Activated T-helper 2 cell treated with anti-CD3 and anti-CD28 coated beads, Interferon-gamma antibody, Interleukin-2, Interleukin-4, amounts not matched to agents 10 μg/mL and 5 μg/mL and 100 μg/mL, durations not matched to agents 14 hours and 24 hours and 36 hours (primary cell): ENCODE measurements at regions of chrX and their contacts with region 1.

Region 1: GRCh38 chrX:153667956-153668396 is 5.6 kb downstream of the PNCK start:
- DNase-seq: peak; percentile 51
- H3K4me3 Mint-ChIP-seq: peak overlapping the region; percentile 74
- H3K27ac Mint-ChIP-seq: no peak overlapping the region
- H3K4me1 Mint-ChIP-seq: peaks cover 6% of the 10 kb centered on the region
- H3K27me3 Mint-ChIP-seq: peaks cover 19% of the 10 kb centered on the region

Region 2: DNA sequence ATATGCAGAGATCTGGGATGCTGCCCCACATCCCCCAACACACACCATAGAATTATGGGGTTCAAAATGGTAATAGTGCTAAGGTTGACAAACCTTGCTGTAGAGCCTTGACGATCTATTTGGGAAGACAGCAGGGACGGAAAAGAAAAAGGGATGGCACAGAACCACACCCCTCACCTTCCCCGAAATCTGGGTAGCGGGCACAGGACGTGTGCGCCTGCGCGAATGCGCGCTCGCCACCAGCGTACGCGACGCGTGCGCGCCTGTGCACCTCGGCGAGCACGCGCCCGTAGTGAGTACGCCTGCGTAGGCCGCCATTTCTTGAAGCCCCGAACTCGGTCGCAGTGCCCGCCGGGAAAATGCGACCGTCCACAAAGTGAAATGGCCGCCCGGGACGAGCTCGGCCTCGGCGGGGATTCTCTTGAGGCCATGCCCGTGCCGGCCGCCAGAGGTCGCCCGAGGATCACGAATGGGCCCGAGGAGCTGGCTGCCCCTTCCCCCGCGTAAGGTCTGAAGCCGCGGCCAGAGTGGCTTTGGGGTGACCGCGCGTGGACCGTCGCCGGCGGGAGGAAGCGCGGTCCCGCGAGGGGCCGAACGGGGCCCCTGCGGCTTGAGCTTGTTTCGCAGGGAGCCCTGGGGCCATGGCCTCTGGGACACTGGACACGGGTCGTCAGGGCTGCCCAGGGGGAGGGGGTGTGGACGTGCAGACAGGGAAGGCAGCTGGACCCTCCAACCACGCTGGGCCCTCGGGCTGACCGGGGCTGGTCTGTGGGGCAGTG is 726.5 kb before region 1 on chrX:
- intact Hi-C with region 1: loop called (anchors 5 kb)
- DNase-seq: peak; percentile 84
- H3K4me3 Mint-ChIP-seq: peak overlapping the region; percentile 80
- H3K27ac Mint-ChIP-seq: peak overlapping the region; percentile 76
- H3K4me1 Mint-ChIP-seq: peaks cover 7% of the 10 kb centered on the region
- H3K27me3 Mint-ChIP-seq: peaks cover 2% of the 10 kb centered on the region

Region 3: GRCh38 chrX:152958524-152959465 is 709.2 kb before region 1 on chrX:
- intact Hi-C with region 1: loop called (anchors 5 kb)
- DNase-seq: peak; percentile 82
- H3K4me3 Mint-ChIP-seq: peak overlapping the region; percentile 47
- H3K27ac Mint-ChIP-seq: peak overlapping the region; percentile 81
- H3K4me1 Mint-ChIP-seq: peaks cover 4% of the 10 kb centered on the region
- H3K27me3 Mint-ChIP-seq: no peaks in the 10 kb centered on the region

Region 4: DNA sequence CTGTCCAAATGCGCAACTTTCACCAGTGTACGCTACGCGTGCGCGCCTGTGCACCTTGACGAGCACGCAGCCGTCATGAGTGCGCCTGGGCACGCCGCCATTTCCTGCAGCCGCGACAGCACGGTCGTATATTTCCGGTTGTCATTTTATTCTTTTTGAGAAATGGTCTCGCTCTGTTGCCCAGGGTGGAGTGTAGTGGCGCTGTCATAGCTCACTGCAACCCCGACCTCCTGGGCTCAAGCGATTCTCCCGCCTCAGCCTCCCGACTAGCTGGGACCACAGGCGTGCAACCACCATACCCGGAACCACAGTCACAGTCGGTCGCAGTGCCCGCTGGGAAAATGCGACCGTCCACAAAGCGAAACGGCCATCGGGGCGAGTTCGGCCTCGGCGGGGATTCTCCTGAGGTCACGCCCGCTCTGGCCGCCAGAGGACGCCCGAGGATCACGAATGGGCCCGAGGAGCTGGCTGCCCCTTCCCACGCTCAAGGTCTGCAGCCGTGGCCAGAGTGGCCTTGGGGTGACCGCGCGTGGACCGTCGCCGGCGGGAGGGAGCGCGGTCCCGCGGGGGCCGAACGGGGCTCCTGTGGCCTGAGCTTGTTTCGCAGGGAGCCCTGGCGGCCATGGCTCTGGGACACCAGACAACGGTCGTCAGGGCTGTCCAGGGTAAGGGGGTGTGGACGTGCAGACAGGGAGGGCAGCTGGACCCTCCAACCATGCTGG is 635.4 kb before region 1 on chrX:
- intact Hi-C with region 1: loop called (anchors 10 kb)
- DNase-seq: peak; percentile 50
- H3K4me3 Mint-ChIP-seq: peak overlapping the region; percentile 79
- H3K27ac Mint-ChIP-seq: peak overlapping the region; percentile 87
- H3K4me1 Mint-ChIP-seq: peaks cover 3% of the 10 kb centered on the region
- H3K27me3 Mint-ChIP-seq: no peaks in the 10 kb centered on the region

Region 5: GRCh38 chrX:153539171-153539978 is 128.6 kb before region 1 on chrX:
- intact Hi-C with region 1: loop called (anchors 2 kb)
- DNase-seq: peak; percentile 19
- H3K4me3 Mint-ChIP-seq: no peak overlapping the region
- H3K27ac Mint-ChIP-seq: no peak overlapping the region
- H3K4me1 Mint-ChIP-seq: no peaks in the 10 kb centered on the region
- H3K27me3 Mint-ChIP-seq: no peaks in the 10 kb centered on the region

Region 6: DNA sequence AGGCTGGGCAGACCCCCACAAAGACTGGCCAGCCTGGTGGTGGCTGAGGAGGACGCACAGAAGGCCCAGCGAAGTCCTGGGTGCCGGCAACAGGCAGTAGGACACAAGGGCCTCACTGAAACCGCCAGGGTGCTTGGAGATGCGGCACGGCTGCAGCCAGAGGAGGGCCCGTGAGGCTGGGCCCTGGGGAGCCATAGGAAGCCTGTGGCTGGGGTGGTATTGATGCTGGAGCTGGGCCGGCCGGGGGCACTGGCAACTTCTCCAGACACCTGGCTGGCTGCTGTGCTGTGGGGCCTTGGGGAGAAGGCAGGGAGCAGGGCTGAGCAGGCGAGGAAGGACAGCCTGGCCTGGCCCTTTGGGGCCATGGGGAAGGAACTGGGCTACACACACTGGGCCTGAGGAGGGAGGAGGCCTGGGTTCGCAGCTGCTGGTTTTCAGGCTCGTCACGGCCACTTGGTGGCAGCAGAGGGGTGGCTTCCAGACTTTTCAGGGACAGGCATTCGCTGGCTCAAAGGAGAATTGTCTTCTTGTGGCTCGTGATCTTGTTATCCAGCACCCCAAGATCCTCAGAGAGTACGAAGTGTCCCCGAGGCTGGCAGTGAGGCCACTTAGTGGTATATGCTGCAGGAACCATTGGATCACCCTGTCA is 113.3 kb before region 1 on chrX:
- intact Hi-C with region 1: loop called (anchors 1 kb)
- DNase-seq: peak; percentile 37
- H3K4me3 Mint-ChIP-seq: no peak overlapping the region
- H3K27ac Mint-ChIP-seq: no peak overlapping the region
- H3K4me1 Mint-ChIP-seq: no peaks in the 10 kb centered on the region
- H3K27me3 Mint-ChIP-seq: no peaks in the 10 kb centered on the region

Region 7: DNA sequence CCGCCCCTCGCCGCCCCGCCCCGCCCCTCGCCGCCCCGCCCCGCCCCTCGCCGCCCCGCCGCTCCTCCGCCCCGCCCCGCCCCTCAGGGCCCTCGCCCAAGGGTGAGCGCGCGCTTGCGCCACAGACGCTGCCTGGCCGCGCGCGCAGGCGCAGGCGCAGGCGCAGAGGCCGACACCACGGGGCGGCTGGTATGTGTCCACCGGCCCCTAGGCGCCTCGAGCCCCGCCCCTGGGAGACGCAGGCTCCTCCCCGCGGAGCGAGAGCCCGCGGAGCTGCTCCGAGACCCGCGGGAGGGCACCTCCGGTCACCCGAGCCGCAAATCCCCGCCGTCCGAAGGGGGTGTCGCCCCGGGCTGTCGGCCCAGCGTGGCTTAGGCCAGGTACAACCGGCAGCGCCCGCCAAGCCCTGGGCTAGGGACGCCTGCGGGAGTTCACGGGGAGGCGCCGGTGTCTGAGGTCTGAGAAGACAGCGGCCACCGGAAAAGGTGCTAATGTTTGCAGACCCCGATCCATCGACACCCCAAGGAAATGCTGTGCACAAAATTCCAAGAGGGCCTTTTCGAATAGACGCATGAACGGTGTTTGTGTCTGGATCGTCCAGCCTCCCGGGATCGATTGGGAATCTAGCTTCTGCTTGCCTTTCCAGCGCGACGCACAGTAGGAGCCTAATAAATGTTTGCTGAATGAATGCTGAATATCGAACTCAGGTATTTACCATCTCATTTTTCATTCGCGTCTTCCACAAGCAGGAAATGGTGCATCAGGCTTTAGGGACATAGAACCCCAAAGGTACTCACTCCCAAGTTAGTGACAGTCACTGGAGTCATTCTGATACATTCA is 68.6 kb before region 1 on chrX:
- intact Hi-C with region 1: no loop called
- DNase-seq: peak; percentile 83
- H3K4me3 Mint-ChIP-seq: peak overlapping the region; percentile 87
- H3K27ac Mint-ChIP-seq: peak overlapping the region; percentile 60
- H3K4me1 Mint-ChIP-seq: peaks cover 25% of the 10 kb centered on the region
- H3K27me3 Mint-ChIP-seq: no peaks in the 10 kb centered on the region

Region 8: DNA sequence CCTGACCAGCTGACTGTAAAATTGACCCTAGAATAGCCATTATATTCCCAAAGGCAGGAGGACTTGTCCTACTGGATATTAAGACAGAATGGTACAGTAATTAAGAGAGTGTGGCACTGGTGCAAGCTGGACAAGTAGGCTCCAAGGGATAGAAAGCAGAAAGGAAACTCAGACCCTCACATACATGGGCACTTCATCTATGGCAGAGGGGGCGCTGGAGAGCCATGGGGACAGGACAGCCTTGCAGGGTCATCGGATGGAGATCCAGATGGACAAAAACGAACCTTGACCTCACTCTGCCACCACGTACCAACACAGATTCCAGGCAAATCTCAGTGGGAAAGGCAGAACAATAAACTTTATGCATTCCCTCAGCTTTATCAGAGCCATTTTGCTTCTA is 1042.3 kb after region 1 on chrX:
- intact Hi-C with region 1: no loop called
- DNase-seq: no peak
- H3K4me3 Mint-ChIP-seq: no peak overlapping the region
- H3K27ac Mint-ChIP-seq: no peak overlapping the region
- H3K4me1 Mint-ChIP-seq: peaks cover 30% of the 10 kb centered on the region
- H3K27me3 Mint-ChIP-seq: no peaks in the 10 kb centered on the region